ENCODE measurements at regions of chr2 and their contacts with region 1.

Region 1: DNA sequence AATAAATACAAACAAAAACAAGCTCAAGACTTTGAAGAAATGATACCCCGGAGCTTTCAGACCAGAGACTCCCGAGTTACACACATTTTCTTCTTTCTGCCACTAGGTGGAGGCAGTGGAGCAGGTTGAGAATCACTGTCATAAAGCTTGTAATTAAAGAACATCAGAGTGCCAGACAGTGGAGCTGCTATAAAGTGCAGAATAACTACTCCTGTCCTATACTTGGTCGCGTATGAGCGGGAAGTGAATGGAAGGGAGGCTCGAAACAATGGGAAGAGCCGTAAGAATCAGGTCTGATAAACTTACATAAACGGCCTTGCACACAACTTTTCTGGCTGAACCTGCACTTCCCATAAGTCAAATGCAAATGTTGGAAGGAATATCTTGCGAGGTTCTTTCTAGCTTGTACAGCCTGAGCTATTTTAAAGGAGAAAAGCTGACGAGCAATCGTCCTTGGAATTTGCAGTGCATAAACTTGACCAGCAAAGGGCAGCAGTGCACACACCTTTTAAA is 189.0 kb downstream of the RPIA start:
- DNase-seq: peak; percentile 46
- ATAC-seq: peak; percentile 83
- H3K4me3 ChIP-seq: no peak overlapping the region
- H3K27ac ChIP-seq: no peak overlapping the region
- H3K4me1 ChIP-seq: no peaks in the 10 kb centered on the region
- H3K27me3 ChIP-seq: peaks cover 5% of the 10 kb centered on the region; the same call in 1 of the 2 replicates
- CTCF ChIP-seq: peak; percentile 88

Region 2: DNA sequence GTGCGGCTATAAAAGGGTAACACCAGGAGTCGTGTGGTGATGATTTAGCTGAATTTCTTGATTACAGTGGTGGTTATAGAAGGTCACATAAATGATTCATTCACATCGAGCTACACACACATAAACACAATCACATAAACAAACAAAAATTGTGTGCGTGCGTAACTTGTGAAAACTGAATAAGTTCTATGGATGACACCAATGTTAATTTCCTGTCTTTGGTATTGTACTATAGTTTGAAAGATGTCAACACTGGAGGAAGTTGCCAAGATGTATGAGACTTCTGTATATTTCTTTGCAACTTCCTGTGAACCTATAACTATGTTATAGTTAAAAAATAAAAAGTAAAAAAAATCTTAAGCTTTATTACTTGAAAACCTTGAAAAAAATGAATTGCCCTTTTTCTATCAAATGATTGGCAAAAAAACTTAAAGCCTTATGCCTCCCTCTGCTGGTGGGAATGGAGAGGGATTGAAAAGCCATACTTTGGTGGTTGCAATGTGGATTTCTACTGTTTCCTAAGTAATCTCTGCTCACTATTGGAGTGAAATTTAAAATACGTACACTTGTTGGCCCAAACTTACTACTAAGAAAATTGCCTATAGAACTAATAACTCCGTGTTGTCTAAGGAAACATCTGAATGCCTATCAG is 38.7 kb after region 1 on chr2:
- CTCF ChIA-PET with region 1: interaction called, 4 read pairs
- POLR2A ChIA-PET with region 1: no interaction called
- in situ Hi-C with region 1: no loop called
- intact Hi-C with region 1: loop called (anchors 5 kb)
- DNase-seq: no peak
- ATAC-seq: no peak
- H3K4me3 ChIP-seq: no peak overlapping the region
- H3K27ac ChIP-seq: no peak overlapping the region
- H3K4me1 ChIP-seq: no peaks in the 10 kb centered on the region
- H3K27me3 ChIP-seq: no peaks in the 10 kb centered on the region
- CTCF ChIP-seq: peak; percentile 63; the same call in 1 of the 2 replicates